ENCODE measurements at regions of chr11 and their contacts with region 1.

Region 1: DNA sequence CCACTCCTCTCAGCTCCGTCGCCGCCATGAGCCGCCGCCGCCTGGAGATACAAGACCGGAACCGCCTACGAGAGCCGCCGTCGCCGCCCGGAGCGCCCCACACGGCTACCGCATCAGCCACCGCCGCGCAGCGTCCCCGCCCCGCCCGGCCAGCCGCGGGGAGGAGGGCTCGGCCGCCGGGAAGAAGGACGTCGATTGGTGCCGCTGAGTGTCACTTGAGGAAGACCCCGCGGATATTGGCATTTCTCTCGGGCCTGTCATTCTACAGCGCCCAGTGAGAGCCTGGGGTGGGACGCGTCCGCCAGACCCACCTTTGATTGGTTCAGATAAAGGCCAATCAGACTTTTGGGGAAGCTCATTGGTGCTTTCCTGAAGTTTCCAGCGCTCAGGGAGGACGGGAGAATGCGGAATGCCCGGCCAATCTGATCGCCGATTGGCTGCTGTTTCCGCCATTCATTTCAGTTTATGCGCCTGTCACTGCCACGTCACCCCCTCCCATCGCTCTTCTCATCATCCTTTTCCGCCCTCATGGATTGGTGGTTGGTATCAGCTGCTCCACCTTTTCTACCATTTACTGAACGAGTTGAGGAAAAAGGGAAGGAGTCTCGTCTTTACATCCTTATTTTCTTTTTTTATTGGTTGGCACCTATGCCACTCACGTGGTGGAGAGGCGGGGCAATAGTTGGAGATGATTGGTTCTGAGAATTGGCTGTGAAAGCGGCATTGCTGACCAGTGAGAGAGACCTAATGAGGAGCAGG is at the start of gene OSBP:
- DNase-seq: peak; percentile 99 to 100
- H3K4me3 ChIP-seq: peak within 1 kb of the TSS; percentile 53 to 79
- H3K27ac ChIP-seq: peak within 1 kb of the TSS; percentile 92
- H3K4me1 ChIP-seq: peaks cover 3 to 19% of the 10 kb centered on the region in 2 donors
- H3K27me3 ChIP-seq: no peaks in the 10 kb centered on the region
- CTCF ChIP-seq: peak in 1 of 3 experiments; percentile 2
- total RNA-seq, gene OSBP: 16.7 TPM

Region 2: DNA sequence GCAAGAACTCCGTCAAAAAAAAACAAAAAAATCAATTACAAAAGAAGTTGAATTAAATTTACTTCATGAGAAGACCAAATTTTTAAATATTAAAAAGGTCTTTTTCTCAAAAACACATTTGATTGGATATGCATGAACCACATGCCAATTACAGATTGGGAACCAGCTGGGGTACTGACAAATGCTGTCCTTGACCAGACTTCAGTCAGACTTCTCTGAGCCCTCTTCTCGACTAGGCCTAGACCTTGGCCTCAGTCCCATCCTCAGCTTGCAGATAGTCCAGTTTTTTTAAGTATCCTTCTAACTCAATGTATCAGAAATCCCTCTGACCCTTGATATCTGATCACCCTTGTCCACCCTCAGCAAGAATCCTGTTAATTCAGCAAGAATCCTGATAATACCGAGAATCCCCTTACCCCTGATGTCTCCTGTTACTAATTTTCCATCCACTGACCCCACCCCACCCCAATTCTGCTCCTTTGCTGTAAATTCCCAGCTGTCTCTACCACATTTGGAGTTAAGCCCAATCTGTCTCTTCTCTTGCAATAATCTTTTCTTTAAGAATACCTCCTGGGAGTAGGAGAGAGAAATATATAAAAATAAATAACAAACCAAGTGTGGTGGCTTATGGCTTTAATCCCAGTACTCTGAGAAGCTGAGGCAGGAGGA is 73.5 kb before region 1 on chr11:
- intact Hi-C with region 1: loop called (anchors 1 kb)
- DNase-seq: no peak
- H3K4me3 ChIP-seq: no peak overlapping the region
- H3K27ac ChIP-seq: no peak overlapping the region
- H3K4me1 ChIP-seq: no peaks in the 10 kb centered on the region
- H3K27me3 ChIP-seq: no peaks in the 10 kb centered on the region
- CTCF ChIP-seq: no peak

Region 3: DNA sequence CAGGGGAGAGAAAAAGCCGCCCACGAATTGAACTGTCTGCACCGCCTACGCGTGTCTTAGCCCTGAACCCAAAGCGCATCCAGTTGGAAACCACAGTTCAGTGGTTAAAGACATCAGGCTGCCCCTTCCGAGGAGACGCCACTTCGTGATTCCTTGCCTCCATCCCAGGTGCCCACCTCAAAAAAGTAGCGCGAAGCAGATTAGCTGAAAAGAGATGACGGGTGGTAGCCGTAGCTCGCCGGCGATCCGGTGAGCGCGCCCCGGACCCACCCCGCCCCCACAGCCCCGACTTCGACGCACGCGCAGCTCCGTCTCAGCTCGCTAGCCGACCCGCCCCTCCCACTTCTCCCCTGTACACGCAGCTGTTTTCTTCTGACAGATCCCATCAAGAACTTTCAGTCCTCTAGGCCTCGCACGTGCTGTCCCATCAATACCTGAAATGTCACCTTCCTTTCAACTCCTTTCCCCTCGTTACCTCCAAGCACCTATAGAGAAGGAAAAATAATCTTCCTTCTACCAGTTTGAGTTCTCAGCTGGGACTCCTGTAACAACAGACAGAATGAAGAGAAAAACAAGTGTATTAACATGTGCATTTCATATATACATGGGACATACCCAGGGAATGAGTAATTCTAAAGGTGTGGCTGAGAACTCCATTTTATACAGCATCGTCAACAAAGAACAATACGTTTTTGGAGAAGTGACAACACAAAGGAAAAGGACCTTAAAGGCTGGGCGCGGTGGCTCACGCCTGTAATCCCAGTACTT is 54.9 kb before region 1 on chr11:
- intact Hi-C with region 1: loop called (anchors 2 kb)
- DNase-seq: peak; percentile 38 to 91
- H3K4me3 ChIP-seq: peak overlapping the region; percentile 83
- H3K27ac ChIP-seq: peak overlapping the region; percentile 74 to 89
- H3K4me1 ChIP-seq: peaks cover 0 to 8% of the 10 kb centered on the region in 2 donors
- H3K27me3 ChIP-seq: no peaks in the 10 kb centered on the region
- CTCF ChIP-seq: no peak

Region 4: GRCh38 chr11:59678118-59678812 is 62.4 kb after region 1 on chr11:
- intact Hi-C with region 1: no loop called
- DNase-seq: no peak
- H3K4me3 ChIP-seq: no peak overlapping the region
- H3K27ac ChIP-seq: no peak overlapping the region
- H3K4me1 ChIP-seq: no peaks in the 10 kb centered on the region
- H3K27me3 ChIP-seq: no peaks in the 10 kb centered on the region
- CTCF ChIP-seq: no peak

Region 5: DNA sequence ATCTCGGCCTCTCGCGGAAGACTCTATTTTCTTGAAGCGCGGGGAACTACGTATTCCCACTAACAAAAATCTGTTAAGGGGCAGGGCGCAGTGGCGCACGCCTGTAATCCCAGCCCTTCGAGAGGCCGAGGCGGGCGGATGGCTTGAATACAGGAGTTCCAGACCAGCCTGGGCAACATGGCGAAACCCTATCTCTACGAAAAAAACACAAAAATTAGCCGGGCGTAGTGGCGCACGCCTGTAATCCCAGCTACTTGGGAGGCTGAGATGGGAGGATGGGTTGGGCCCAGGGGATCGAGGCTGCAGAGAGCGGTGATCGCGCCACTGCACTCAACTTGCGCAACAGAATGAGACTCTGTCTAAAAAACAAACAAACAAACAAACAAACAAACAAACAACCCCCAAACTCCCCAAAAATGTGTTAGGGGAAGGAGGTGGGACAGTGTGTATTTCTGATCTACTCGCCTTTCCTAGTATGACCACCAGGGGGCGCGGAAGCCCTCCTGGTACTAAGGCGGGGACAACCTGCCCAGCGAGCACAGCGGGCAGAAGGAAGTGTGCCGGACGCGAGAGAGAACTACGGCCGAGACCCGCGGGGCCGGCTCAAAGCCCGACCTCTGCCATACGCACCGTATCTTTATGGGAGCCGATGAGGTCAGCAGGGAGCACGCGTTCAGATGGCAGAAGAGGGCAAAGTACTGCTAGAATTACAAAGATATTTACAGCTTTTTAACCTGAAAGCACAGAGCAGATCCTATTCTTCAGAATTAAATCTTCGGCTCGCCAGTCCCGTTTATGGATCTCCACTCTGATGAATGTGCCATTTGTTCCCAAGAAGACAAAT is 138.1 kb after region 1 on chr11:
- intact Hi-C with region 1: loop called (anchors 1 kb)
- DNase-seq: peak; percentile 53 to 93
- H3K4me3 ChIP-seq: peak overlapping the region; percentile 89 to 97
- H3K27ac ChIP-seq: peak overlapping the region; percentile 95 to 97
- H3K4me1 ChIP-seq: peaks cover 0 to 9% of the 10 kb centered on the region in 2 donors
- H3K27me3 ChIP-seq: no peaks in the 10 kb centered on the region
- CTCF ChIP-seq: peak; percentile 75 to 91 (median 86)

Region 6: GRCh38 chr11:61161190-61162091 is 1545.6 kb after region 1 on chr11 and contains the start of gene VPS37C:
- intact Hi-C with region 1: loop called (anchors 5 kb)
- DNase-seq: peak; percentile 57 to 94
- H3K4me3 ChIP-seq: peak within 1 kb of the TSS; percentile 73 to 91
- H3K27ac ChIP-seq: peak within 1 kb of the TSS; percentile 96 to 99
- H3K4me1 ChIP-seq: peaks cover 3 to 24% of the 10 kb centered on the region in 2 donors
- H3K27me3 ChIP-seq: no peaks in the 10 kb centered on the region
- CTCF ChIP-seq: peak in 1 of 3 experiments; percentile 22
- total RNA-seq, gene VPS37C: 25.8 TPM

Measured in ascending aorta (tissue), 2 donors.